ENCODE measurements at regions of chr13 and their contacts with region 1.

Region 1: DNA sequence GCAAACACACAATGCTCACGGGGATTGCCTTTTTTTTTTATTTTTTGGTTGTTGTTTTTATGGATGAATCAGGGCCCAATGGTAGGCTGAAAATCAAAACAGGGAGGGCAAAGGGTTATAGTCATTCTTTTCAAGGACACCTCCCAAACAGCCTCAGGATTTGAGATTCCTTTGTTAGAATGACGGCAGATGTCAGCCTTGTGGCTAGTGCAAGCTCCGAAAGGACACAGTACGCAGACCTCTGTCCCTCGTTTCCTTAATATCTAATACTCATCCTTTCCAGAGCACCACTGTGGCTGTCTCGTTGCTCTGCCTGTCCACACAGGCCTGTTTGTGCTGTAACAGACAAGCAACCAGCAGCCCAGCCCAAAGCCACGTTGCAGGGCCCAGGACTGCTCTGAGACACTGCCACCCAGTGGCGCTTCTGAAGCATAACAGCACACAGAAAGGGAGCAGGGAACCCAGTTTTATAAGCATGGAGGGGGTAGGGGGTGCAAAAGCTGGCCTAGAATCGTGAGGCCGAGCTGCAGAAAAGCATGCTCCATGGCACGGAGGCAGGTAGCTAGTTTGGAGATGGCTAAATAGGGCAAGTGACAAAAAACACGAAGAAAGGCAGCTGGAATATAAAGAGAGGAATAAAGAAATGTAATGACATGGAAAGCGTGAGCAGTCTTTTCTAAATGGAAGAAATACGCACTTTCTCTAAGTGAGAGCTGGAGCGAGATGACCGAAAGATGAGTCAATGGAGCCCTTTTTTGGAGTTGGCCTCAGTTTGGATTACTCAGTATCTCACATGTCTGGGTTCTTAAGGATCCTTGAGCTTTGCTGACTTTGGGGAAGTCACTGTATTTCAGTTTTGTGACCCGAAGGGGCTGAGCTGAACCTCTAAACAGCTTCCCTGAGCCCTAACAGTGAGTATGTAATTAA is 40.7 kb upstream of the MEDAG start:
- H3K4me3 ChIP-seq: no peak overlapping the region
- H3K27ac ChIP-seq: peak overlapping the region; percentile 21; the same call in 1 of the 2 replicates
- H3K4me1 ChIP-seq: peaks cover 3% of the 10 kb centered on the region
- CTCF ChIP-seq: peak; percentile 85

Region 2: GRCh38 chr13:30805603-30806011 is 59.8 kb before region 1 on chr13:
- CTCF ChIA-PET with region 1: interaction called, 14 read pairs
- POLR2A ChIA-PET with region 1: no interaction called
- H3K4me3 ChIP-seq: no peak overlapping the region
- H3K27ac ChIP-seq: no peak overlapping the region
- H3K4me1 ChIP-seq: no peaks in the 10 kb centered on the region
- CTCF ChIP-seq: no peak

Measured in HEK293 (cell line).